K562 (cell line): ENCODE measurements at regions of chr7 and their contacts with region 1.

Region 1: GRCh38 chr7:25093268-25093826 is 31.7 kb downstream of the CYCS start:
- DNase-seq: peak; percentile 78 to 89 (median 82)
- ATAC-seq: peak; percentile 97
- H3K4me3 ChIP-seq: no peak overlapping the region
- H3K27ac ChIP-seq: no peak overlapping the region
- H3K4me1 ChIP-seq: peaks cover 2 to 3% of the 10 kb centered on the region in 2 experiments; a peak in 3 of 5 replicates
- H3K27me3 ChIP-seq: no peaks in the 10 kb centered on the region
- CTCF ChIP-seq: peak; percentile 91 to 94 (median 91)
- EP300 ChIP-seq: 0 out of 2 replicates have a peak, but pooled peaks have one; percentile 25
- POLR2A ChIP-seq: no peak
- RAD21 ChIP-seq: peak; percentile 79 to 88

Region 2: GRCh38 chr7:24318326-24318725 is 775.0 kb before region 1 on chr7:
- CTCF ChIA-PET with region 1: interaction called, 7 read pairs
- POLR2A ChIA-PET with region 1: no interaction called
- in situ Hi-C with region 1: loop called (anchors 10 kb)
- intact Hi-C with region 1: no loop called
- DNase-seq: peak; percentile 21 to 38 (median 25)
- ATAC-seq: peak; percentile 78
- H3K4me3 ChIP-seq: no peak overlapping the region
- H3K27ac ChIP-seq: no peak overlapping the region
- H3K4me1 ChIP-seq: no peaks in the 10 kb centered on the region
- H3K27me3 ChIP-seq: peaks cover 0 to 7% of the 10 kb centered on the region in 2 experiments; a peak in 2 of 5 replicates
- CTCF ChIP-seq: peak; percentile 57 to 62 (median 61)
- EP300 ChIP-seq: no peak
- POLR2A ChIP-seq: no peak
- RAD21 ChIP-seq: peak; percentile 28 to 69; a peak in 3 of 4 replicates

Region 3: GRCh38 chr7:24722386-24723177 is 370.8 kb before region 1 on chr7:
- CTCF ChIA-PET with region 1: no interaction called
- POLR2A ChIA-PET with region 1: no interaction called
- in situ Hi-C with region 1: loop called (anchors 10 kb)
- intact Hi-C with region 1: loop called (anchors 10 kb)
- DNase-seq: peak in 1 of 4 experiments; percentile 36
- ATAC-seq: peak; percentile 79
- H3K4me3 ChIP-seq: no peak overlapping the region
- H3K27ac ChIP-seq: no peak overlapping the region
- H3K4me1 ChIP-seq: peaks cover 5 to 10% of the 10 kb centered on the region in 2 experiments; a peak in 4 of 5 replicates
- H3K27me3 ChIP-seq: peaks cover 0 to 7% of the 10 kb centered on the region in 2 experiments; a peak in 2 of 5 replicates
- CTCF ChIP-seq: peak; percentile 55 to 63 (median 57); a peak in 5 of 6 replicates
- EP300 ChIP-seq: no peak
- POLR2A ChIP-seq: no peak
- RAD21 ChIP-seq: peak in 1 of 2 experiments; percentile 66; a peak in 2 of 4 replicates

Region 4: DNA sequence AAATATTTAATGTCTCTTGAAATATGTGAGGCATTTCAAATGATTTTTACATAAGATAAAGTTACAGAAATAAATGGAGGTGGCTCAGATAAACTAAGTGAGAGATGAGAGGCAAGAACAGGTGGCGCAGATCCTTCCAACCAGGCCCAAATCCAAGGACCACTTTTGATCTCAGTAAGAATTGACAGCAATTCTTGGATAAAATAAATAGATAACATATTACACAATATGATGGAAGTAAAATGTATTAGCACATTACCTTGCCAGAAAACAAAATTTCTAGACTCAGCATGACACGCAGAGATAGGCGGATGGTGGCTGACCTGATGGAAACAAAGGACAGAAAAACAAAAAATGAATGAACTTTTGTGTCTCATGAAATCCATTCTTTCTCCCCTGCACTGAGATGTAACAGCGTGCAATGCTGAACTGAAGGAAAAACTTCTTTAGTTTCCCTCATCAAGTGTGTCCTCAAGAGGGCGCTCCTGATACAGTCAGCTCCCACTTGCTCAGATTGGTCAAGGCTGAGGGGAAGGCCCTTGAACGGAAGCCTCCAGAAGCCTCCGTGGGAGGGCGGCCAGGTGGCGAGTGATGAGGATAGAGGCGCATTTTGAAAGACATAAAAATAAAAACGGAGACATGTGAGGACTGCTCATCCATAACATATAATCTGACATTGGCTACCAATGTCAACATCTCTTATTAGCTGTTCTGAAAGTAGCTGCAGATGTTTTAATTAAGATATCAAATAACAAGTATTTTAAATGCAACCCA is 273.2 kb before region 1 on chr7:
- CTCF ChIA-PET with region 1: interaction called, 24 read pairs
- POLR2A ChIA-PET with region 1: interaction called, 5 read pairs
- in situ Hi-C with region 1: no loop called
- intact Hi-C with region 1: loop called (anchors 1 kb)
- DNase-seq: peak; percentile 83 to 94 (median 86)
- ATAC-seq: peak; percentile 95
- H3K4me3 ChIP-seq: no peak overlapping the region
- H3K27ac ChIP-seq: peak overlapping the region; percentile 80; the same call in 2 of the 3 replicates
- H3K4me1 ChIP-seq: peaks cover 9 to 22% of the 10 kb centered on the region in 2 experiments; a peak in 4 of 5 replicates
- H3K27me3 ChIP-seq: no peaks in the 10 kb centered on the region
- CTCF ChIP-seq: peak; percentile 88 to 92 (median 91)
- EP300 ChIP-seq: peak; percentile 17; the same call in 1 of the 2 replicates
- POLR2A ChIP-seq: no peak
- RAD21 ChIP-seq: peak; percentile 94 to 97

Region 5: GRCh38 chr7:24979863-24980533 is 113.3 kb before region 1 on chr7 and contains the start of gene OSBPL3:
- CTCF ChIA-PET with region 1: interaction called, 3 read pairs
- POLR2A ChIA-PET with region 1: no interaction called
- in situ Hi-C with region 1: no loop called
- intact Hi-C with region 1: loop called (anchors 1 kb)
- DNase-seq: peak; percentile 96 to 99 (median 98)
- ATAC-seq: peak; percentile 88
- H3K4me3 ChIP-seq: peak within 1 kb of the TSS; percentile 85
- H3K27ac ChIP-seq: peak within 1 kb of the TSS; percentile 80
- H3K4me1 ChIP-seq: peaks cover 21 to 34% of the 10 kb centered on the region in 2 experiments
- H3K27me3 ChIP-seq: no peaks in the 10 kb centered on the region
- CTCF ChIP-seq: peak in 2 of 3 experiments; percentile 22 to 53; a peak in 4 of 6 replicates
- EP300 ChIP-seq: no peak; the same call in 1 of the 2 replicates
- POLR2A ChIP-seq: peak; percentile 86
- RAD21 ChIP-seq: peak; percentile 14 to 36; a peak in 2 of 4 replicates
- polyA plus RNA-seq, gene OSBPL3: 4.8 to 6.8 TPM